CD4-positive, alpha-beta T cell (primary cell): ENCODE measurements at regions of chr5 and their contacts with region 1.

Region 1: DNA sequence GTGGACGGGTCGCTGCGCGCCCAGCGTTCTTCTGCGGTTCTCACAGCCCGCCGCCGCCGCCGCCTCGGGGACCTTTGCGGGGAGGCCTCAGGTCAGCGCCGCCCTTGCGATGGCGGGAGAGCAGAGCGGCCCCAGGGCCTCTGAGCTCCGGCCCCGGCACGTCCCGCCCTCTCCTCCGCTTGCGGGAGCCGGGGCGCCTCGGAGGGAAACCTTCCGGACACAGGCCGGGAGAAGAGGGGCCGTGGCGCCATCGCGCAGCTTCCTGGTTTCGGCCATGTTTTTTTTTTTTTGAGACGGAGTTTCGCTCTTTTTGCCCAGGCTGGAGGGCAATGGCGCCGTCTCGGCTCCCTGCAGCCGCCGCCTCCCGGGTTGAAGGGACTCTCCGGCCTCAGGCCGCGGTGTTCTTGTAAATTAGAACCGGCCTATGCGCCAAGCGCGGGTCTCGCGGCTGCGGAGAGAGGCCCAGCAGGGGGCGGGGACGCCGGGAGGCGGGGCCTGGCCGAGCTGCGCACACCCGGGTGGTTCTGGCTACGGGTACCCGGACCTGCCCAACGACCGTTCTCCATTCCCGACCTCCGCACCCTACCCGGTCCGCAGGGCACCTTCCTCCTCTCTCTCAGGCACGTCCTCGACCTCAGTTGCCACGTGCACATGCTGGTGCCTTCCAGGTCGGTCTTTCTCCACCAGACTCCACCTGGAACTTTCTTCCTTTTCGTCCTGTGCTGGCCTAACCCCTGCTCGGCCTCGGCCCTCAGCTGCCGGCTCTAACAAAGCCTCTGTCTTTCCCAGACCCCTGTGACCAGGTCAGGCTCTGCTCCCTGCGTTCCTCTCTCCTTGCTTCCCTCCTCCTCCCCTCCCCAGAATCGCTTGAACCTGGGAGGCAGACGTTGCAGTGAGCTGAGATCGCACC is 28.8 kb upstream of the MGAT1 start:
- DNase-seq: peak; percentile 57 to 86 (median 75)
- ATAC-seq: peak; percentile 45
- H3K4me3 ChIP-seq: peak overlapping the region; percentile 92
- H3K4me3 Mint-ChIP-seq: peak overlapping the region; percentile 99
- H3K27ac ChIP-seq: peak overlapping the region; percentile 94 to 96
- H3K27ac Mint-ChIP-seq: peak overlapping the region; percentile 99
- H3K4me1 ChIP-seq: peaks cover 54% of the 10 kb centered on the region
- H3K4me1 Mint-ChIP-seq: peaks cover 63% of the 10 kb centered on the region
- H3K27me3 ChIP-seq: no peaks in the 10 kb centered on the region
- H3K27me3 Mint-ChIP-seq: no peaks in the 10 kb centered on the region
- CTCF ChIP-seq: no peak

Region 2: DNA sequence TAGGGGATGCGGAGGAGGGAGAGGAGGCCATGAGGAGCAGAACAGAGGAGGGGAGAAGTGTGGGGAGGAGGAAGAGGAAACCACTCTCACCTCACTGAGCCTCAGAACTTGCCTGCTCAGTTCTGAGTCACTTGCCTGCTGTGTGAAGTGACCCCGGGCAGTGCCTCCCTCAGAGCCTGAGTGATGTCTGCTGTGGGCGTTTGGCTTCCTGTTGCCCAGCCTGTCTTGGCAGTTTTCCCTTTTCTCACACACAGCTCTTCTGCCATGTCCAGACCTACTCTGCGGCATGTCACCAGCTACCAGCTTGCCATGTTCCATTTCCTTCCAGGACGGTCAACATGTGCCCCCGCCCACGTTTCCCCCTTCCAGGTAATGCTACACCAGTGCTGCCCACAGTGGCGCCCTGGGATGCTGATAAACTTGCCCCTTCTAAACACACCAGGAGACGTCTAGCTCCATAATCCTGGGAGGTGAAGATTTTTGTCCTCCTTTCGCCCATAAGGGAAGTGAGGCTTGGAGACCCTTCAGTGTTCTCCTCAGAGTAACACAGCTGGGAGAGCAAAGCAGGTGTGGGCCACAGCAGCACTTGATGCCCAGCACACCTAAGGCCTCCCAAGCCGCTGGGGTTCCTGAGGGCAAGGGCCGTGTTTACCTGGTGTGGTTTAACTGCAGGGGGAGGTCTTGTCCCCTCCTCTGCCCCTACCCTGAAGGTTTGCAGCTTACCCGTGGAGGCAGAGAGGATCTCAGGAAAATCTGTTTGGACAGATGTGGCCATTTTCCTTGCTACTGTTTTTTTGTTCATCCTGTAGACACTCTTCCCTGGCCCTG is 696.1 kb before region 1 on chr5:
- CTCF ChIA-PET with region 1: no interaction called
- POLR2A ChIA-PET with region 1: no interaction called
- intact Hi-C with region 1: no loop called
- DNase-seq: peak in 2 of 14 experiments; percentile 24 to 27
- ATAC-seq: no peak
- H3K4me3 ChIP-seq: no peak overlapping the region
- H3K4me3 Mint-ChIP-seq: no peak overlapping the region
- H3K27ac ChIP-seq: no peak overlapping the region
- H3K27ac Mint-ChIP-seq: no peak overlapping the region
- H3K4me1 ChIP-seq: peaks cover 4% of the 10 kb centered on the region
- H3K4me1 Mint-ChIP-seq: no peaks in the 10 kb centered on the region
- H3K27me3 ChIP-seq: no peaks in the 10 kb centered on the region
- H3K27me3 Mint-ChIP-seq: peaks cover 7% of the 10 kb centered on the region
- CTCF ChIP-seq: no peak

Region 3: GRCh38 chr5:180802325-180803180 is 28.8 kb before region 1 on chr5 and contains the start of gene MGAT1:
- CTCF ChIA-PET with region 1: interaction called, 17 read pairs
- POLR2A ChIA-PET with region 1: interaction called, 612 read pairs
- intact Hi-C with region 1: loop called (anchors 1 to 2 kb)
- DNase-seq: peak; percentile 48 to 89 (median 70)
- ATAC-seq: peak; percentile 49
- H3K4me3 ChIP-seq: peak within 1 kb of the TSS; percentile 84
- H3K4me3 Mint-ChIP-seq: peak within 1 kb of the TSS; percentile 99
- H3K27ac ChIP-seq: peak within 1 kb of the TSS; percentile 84 to 87
- H3K27ac Mint-ChIP-seq: peak within 1 kb of the TSS; percentile 94
- H3K4me1 ChIP-seq: peaks cover 86% of the 10 kb centered on the region
- H3K4me1 Mint-ChIP-seq: peaks cover 89% of the 10 kb centered on the region
- H3K27me3 ChIP-seq: no peaks in the 10 kb centered on the region
- H3K27me3 Mint-ChIP-seq: no peaks in the 10 kb centered on the region
- CTCF ChIP-seq: no peak
- total RNA-seq, gene MGAT1: 49.0 to 60.2 TPM

Region 4: DNA sequence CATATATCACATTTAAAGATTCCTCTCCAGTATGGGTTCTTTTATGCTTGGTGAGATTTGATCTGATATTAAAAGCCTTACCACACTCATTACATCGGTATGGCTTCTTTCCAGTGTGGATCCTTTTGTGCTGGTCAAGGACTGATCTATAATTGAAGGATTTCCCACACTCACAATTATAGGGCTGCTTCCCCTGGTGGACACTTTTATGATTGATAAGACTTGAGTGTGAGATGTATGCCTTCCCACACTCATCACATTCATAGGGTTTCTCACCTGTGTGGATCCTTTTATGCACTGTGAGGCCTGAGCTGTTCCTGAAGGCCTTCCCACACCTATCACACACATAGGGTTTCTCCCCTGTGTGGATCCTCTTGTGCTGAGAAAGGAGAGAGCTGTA is 17.5 kb after region 1 on chr5:
- CTCF ChIA-PET with region 1: interaction called, 3 read pairs
- POLR2A ChIA-PET with region 1: interaction called, 10 read pairs
- intact Hi-C with region 1: no loop called
- DNase-seq: no peak
- ATAC-seq: no peak
- H3K4me3 ChIP-seq: no peak overlapping the region
- H3K4me3 Mint-ChIP-seq: no peak overlapping the region
- H3K27ac ChIP-seq: no peak overlapping the region
- H3K27ac Mint-ChIP-seq: no peak overlapping the region
- H3K4me1 ChIP-seq: no peaks in the 10 kb centered on the region
- H3K4me1 Mint-ChIP-seq: peaks cover 8% of the 10 kb centered on the region
- H3K27me3 ChIP-seq: no peaks in the 10 kb centered on the region
- H3K27me3 Mint-ChIP-seq: no peaks in the 10 kb centered on the region
- CTCF ChIP-seq: no peak

Region 5: GRCh38 chr5:180868960-180869359 is 37.6 kb after region 1 on chr5:
- CTCF ChIA-PET with region 1: interaction called, 5 read pairs
- POLR2A ChIA-PET with region 1: interaction called, 11 read pairs
- intact Hi-C with region 1: loop called in 1 of 2 experiments (anchors 2 kb)
- DNase-seq: peak; percentile 19 to 77 (median 52)
- ATAC-seq: peak; percentile 48
- H3K4me3 ChIP-seq: no peak overlapping the region
- H3K4me3 Mint-ChIP-seq: no peak overlapping the region
- H3K27ac ChIP-seq: no peak overlapping the region
- H3K27ac Mint-ChIP-seq: no peak overlapping the region
- H3K4me1 ChIP-seq: peaks cover 7% of the 10 kb centered on the region
- H3K4me1 Mint-ChIP-seq: no peaks in the 10 kb centered on the region
- H3K27me3 ChIP-seq: no peaks in the 10 kb centered on the region
- H3K27me3 Mint-ChIP-seq: peaks cover 26% of the 10 kb centered on the region
- CTCF ChIP-seq: peak; percentile 72

Region 6: DNA sequence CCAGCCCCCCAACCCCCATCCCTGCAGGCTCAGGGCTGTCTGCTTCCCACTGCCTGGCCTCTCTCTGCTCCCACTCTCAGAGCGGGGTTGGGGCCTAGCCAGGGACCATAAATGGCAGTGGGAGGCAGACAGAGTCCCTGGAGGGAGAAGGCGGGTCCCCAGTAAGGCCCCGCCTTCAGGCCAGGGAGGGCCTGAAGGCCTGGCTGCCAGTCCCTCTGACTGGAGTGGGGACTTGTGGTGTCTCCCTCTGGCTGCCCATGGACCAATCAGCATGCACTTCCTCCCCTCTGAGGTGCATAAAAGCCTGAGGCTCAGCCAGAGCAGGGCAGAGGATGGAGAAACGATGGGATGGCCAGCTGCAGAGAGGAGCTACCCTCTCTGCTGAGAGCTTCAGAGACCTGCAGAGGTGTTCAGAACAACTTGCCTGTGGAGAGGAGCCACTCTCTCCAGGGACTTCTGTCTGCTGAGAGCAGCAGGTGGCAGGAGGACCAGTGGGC is 206.0 kb after region 1 on chr5:
- CTCF ChIA-PET with region 1: no interaction called
- POLR2A ChIA-PET with region 1: no interaction called
- intact Hi-C with region 1: no loop called
- DNase-seq: no peak
- ATAC-seq: no peak
- H3K4me3 ChIP-seq: no peak overlapping the region
- H3K4me3 Mint-ChIP-seq: no peak overlapping the region
- H3K27ac ChIP-seq: no peak overlapping the region
- H3K27ac Mint-ChIP-seq: no peak overlapping the region
- H3K4me1 ChIP-seq: no peaks in the 10 kb centered on the region
- H3K4me1 Mint-ChIP-seq: no peaks in the 10 kb centered on the region
- H3K27me3 ChIP-seq: peaks cover 9 to 18% of the 10 kb centered on the region in 2 experiments
- H3K27me3 Mint-ChIP-seq: peaks cover 34% of the 10 kb centered on the region
- CTCF ChIP-seq: no peak